Activated CD8-positive, alpha-beta T cell treated with anti-CD3 and anti-CD28 coated beads for 36 hours (primary cell): ENCODE measurements at regions of chr6 and their contacts with region 1.

Region 1: DNA sequence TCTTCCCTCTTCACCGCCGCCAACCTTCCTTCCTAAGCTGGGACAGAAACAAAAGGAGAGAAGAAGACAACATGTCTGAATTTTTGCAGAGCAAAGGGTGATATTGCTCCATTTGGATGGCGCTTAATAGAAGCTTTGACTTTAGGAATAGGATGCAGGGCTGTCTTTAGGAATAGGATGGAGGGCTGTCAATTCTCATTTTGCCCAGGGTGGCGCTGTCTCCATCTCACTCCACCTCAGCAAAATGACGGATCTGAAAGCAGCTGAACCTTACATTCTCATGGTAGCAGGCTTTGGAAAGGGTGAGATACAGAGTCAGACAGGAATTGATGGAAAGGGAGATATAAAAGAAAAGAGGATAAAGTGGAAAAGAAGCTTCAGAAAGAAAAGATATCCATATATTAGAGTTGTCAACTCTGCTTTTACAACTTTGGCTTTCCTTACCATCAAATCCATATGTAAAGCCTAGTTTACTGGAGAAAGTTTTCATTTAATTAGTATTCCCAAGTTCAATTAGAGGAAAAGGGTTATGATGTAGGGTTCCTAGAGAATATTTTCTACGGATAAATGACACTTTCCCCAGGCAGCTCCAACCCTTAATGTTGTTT is 2.4 kb downstream of the MTCL3 start:
- DNase-seq: peak; percentile 74
- ATAC-seq: peak; percentile 45
- H3K4me3 Mint-ChIP-seq: peak overlapping the region; percentile 86
- H3K27ac Mint-ChIP-seq: peak overlapping the region; percentile 1
- H3K4me1 Mint-ChIP-seq: peaks cover 26% of the 10 kb centered on the region
- H3K27me3 Mint-ChIP-seq: peaks cover 36% of the 10 kb centered on the region
- CTCF ChIP-seq: peak; percentile 85

Region 2: GRCh38 chr6:127266178-127266891 is 250.4 kb before region 1 on chr6 and contains the start of gene RNF146:
- CTCF ChIA-PET with region 1: interaction called, 11 read pairs
- POLR2A ChIA-PET with region 1: interaction called, 5 read pairs
- intact Hi-C with region 1: no loop called
- DNase-seq: peak; percentile 73
- ATAC-seq: peak; percentile 76
- H3K4me3 Mint-ChIP-seq: peak within 1 kb of the TSS; percentile 93
- H3K27ac Mint-ChIP-seq: peak within 1 kb of the TSS; percentile 100
- H3K4me1 Mint-ChIP-seq: peaks cover 30% of the 10 kb centered on the region
- H3K27me3 Mint-ChIP-seq: no peaks in the 10 kb centered on the region
- CTCF ChIP-seq: peak; percentile 84
- total RNA-seq, gene RNF146: 12.5 to 13.2 TPM

Region 3: GRCh38 chr6:127342946-127343808 is 173.6 kb before region 1 on chr6 and contains the start of gene ECHDC1:
- CTCF ChIA-PET with region 1: interaction called, 9 read pairs
- POLR2A ChIA-PET with region 1: no interaction called
- intact Hi-C with region 1: loop called (anchors 10 kb)
- DNase-seq: peak; percentile 86
- ATAC-seq: peak; percentile 90
- H3K4me3 Mint-ChIP-seq: no peak within 1 kb of the TSS
- H3K27ac Mint-ChIP-seq: no peak within 1 kb of the TSS
- H3K4me1 Mint-ChIP-seq: peaks cover 12% of the 10 kb centered on the region
- H3K27me3 Mint-ChIP-seq: no peaks in the 10 kb centered on the region
- CTCF ChIP-seq: no peak
- total RNA-seq, gene ECHDC1: 50.2 to 51.1 TPM

Region 4: GRCh38 chr6:127464881-127465459 is 51.8 kb before region 1 on chr6:
- CTCF ChIA-PET with region 1: interaction called, 18 read pairs
- POLR2A ChIA-PET with region 1: no interaction called
- intact Hi-C with region 1: no loop called
- DNase-seq: peak; percentile 81
- ATAC-seq: peak; percentile 92
- H3K4me3 Mint-ChIP-seq: no peak overlapping the region
- H3K27ac Mint-ChIP-seq: no peak overlapping the region
- H3K4me1 Mint-ChIP-seq: no peaks in the 10 kb centered on the region
- H3K27me3 Mint-ChIP-seq: no peaks in the 10 kb centered on the region
- CTCF ChIP-seq: peak; percentile 89

Region 5: GRCh38 chr6:127496471-127496870 is 20.3 kb before region 1 on chr6:
- CTCF ChIA-PET with region 1: interaction called, 16 read pairs
- POLR2A ChIA-PET with region 1: interaction called, 3 read pairs
- intact Hi-C with region 1: no loop called
- DNase-seq: no peak
- ATAC-seq: no peak
- H3K4me3 Mint-ChIP-seq: no peak overlapping the region
- H3K27ac Mint-ChIP-seq: no peak overlapping the region
- H3K4me1 Mint-ChIP-seq: no peaks in the 10 kb centered on the region
- H3K27me3 Mint-ChIP-seq: peaks cover 11% of the 10 kb centered on the region
- CTCF ChIP-seq: no peak

Region 6: GRCh38 chr6:127533011-127533410 is 16.2 kb after region 1 on chr6:
- CTCF ChIA-PET with region 1: interaction called, 41 read pairs
- POLR2A ChIA-PET with region 1: interaction called, 3 read pairs
- intact Hi-C with region 1: no loop called
- DNase-seq: no peak
- ATAC-seq: no peak
- H3K4me3 Mint-ChIP-seq: no peak overlapping the region
- H3K27ac Mint-ChIP-seq: no peak overlapping the region
- H3K4me1 Mint-ChIP-seq: no peaks in the 10 kb centered on the region
- H3K27me3 Mint-ChIP-seq: peaks cover 21% of the 10 kb centered on the region
- CTCF ChIP-seq: no peak

Region 7: DNA sequence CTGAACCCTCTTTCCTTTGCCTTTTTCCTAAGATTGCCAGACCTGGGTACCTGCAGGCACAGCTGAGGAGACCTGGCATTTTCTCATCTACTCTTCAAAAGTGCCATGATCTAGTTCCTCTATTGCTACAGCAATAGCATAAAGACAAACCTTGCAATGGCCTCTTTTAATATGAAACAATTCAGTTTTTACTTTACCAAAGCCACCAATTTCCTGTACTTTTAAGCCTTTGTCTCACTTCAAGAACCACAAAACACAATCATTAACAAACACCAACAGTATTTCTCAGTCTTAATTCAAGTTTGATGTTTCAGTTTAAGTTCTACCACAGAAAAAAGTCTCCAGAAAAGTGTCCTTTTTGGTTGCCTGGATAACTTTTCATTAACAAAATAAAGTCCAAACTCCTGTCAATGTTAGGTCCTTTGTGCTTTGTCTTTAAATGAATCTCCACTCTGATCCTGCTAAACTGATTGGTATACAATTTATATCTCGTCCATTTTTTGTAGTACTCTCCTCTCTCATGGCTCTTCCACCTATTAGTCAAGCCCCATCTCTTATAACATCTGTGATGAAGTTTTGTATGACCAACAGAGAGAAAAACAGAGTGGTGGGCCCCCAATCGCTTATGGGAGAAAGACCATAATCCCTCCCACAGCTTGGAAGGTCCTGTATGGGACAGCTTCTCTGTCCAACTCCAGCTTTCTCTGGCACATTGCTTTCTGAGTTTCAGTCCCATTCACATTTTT is 434.6 kb after region 1 on chr6:
- CTCF ChIA-PET with region 1: no interaction called
- POLR2A ChIA-PET with region 1: no interaction called
- intact Hi-C with region 1: no loop called
- DNase-seq: no peak
- ATAC-seq: peak; percentile 53
- H3K4me3 Mint-ChIP-seq: peak overlapping the region; percentile 49
- H3K27ac Mint-ChIP-seq: peak overlapping the region; percentile 94
- H3K4me1 Mint-ChIP-seq: peaks cover 68% of the 10 kb centered on the region
- H3K27me3 Mint-ChIP-seq: no peaks in the 10 kb centered on the region
- CTCF ChIP-seq: no peak